Activated CD4-positive, alpha-beta memory T cell treated with anti-CD3 and anti-CD28 coated beads, Interleukin-2, amount 10 ng/mL, durations not matched to agents 7 days and 5 days (primary cell): ENCODE measurements at regions of chr19 and their contacts with region 1.

Region 1: DNA sequence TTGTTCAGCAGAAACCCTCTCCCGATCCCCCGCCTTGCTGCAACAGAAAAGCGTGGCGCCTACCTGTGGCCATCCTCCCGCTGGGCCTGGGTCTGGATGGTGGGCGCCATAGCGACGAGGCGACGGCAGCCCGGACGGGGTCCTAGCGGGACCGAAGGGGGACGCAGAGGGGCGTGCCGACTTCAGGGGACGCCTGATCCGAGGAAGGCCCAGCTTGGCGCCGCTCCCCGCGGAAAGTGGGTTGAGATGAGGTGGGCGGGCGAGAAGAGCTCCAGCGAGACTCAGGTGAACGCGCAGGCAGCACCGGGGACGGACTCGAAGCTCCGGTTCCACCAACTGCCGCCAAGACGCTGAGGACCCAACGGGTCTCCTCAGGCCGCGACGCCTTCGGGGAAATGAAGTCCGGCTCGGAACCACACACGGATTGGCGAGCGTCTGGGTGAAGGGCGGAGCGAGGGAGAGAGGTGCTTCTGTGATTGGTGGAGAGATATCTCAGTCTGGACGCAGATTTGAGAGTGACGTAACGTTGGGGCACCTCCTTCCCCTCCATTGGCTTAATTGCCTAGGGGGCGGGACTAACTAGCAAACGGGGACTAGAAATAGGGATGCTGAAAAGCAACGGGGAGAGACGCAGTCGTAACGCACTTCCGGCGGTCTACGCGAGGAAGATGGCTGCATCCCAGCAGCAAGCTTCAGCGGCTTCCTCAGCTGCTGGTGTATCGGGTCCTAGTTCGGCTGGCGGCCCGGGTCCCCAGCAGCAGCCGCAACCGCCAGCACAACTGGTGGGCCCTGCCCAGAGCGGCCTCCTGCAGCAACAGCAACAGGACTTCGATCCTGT is at the starts of genes MED29 and PAF1:
- DNase-seq: peak; percentile 97
- H3K4me3 Mint-ChIP-seq: peak within 1 kb of the TSS; percentile 90
- H3K27ac Mint-ChIP-seq: peak within 1 kb of the TSS; percentile 97
- H3K4me1 Mint-ChIP-seq: peaks cover 52% of the 10 kb centered on the region
- H3K27me3 Mint-ChIP-seq: no peaks in the 10 kb centered on the region
- total RNA-seq, gene MED29: 32.3 to 34.5 TPM
- total RNA-seq, gene PAF1: 44.0 to 47.2 TPM

Region 2: GRCh38 chr19:39270036-39270871 is 120.7 kb before region 1 on chr19:
- CTCF ChIA-PET with region 1: no interaction called
- POLR2A ChIA-PET with region 1: no interaction called
- DNase-seq: no peak
- H3K4me3 Mint-ChIP-seq: no peak overlapping the region
- H3K27ac Mint-ChIP-seq: no peak overlapping the region
- H3K4me1 Mint-ChIP-seq: no peaks in the 10 kb centered on the region
- H3K27me3 Mint-ChIP-seq: peaks cover 14% of the 10 kb centered on the region

Region 3: GRCh38 chr19:39335168-39335548 is 55.8 kb before region 1 on chr19:
- CTCF ChIA-PET with region 1: interaction called, 4 read pairs
- POLR2A ChIA-PET with region 1: interaction called, 27 read pairs
- DNase-seq: peak; percentile 44
- H3K4me3 Mint-ChIP-seq: peak overlapping the region; percentile 98
- H3K27ac Mint-ChIP-seq: peak overlapping the region; percentile 97
- H3K4me1 Mint-ChIP-seq: peaks cover 62% of the 10 kb centered on the region
- H3K27me3 Mint-ChIP-seq: no peaks in the 10 kb centered on the region

Region 4: DNA sequence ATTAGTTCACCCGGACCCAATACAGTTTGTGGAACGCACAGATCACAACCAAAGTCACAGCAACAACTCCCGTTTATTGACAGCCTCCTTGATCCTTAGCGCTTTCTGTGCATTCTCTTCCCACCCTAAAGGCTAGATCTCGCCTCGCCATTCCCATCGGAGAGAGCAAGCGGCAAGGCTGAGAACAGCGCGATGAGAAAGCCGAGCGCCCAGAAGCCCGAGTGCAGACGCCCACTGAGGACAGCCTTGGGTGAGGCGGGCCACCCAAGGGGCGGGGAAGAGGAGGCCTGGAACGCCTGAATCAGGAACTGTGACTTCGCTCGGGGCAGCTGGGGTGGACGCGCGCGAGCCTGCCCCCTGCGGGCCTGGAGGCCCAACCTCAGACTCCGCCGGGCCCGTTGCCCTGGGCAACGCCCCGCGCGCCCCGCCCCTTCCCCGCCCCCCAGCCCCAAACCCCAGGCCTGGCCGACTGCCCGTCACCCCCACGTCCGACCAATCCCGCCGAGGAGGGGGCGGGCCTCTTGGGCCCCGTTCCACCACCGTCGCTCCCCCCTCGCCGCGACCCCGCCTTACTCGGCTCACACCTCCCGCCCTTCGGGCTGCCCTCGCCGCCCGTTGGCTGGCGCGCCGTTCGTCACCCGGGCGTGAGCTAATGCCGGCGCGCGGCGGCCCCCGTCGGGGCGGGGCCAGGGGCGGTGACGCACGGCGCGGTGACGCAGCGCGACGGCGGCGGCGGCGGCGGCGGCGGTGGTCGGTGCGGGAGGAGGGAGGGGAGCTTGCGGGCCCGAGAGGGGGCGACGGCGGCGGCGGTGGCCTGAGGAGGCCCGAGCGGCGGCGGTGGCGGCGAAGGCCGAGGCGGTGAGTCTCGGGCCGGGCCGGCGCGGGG is 49.0 kb before region 1 on chr19 and contains the start of gene SAMD4B:
- CTCF ChIA-PET with region 1: interaction called, 9 read pairs
- POLR2A ChIA-PET with region 1: interaction called, 18 read pairs
- DNase-seq: peak; percentile 99
- H3K4me3 Mint-ChIP-seq: peak within 1 kb of the TSS; percentile 98
- H3K27ac Mint-ChIP-seq: peak within 1 kb of the TSS; percentile 95
- H3K4me1 Mint-ChIP-seq: peaks cover 71% of the 10 kb centered on the region
- H3K27me3 Mint-ChIP-seq: no peaks in the 10 kb centered on the region
- total RNA-seq, gene SAMD4B: 53.9 to 54.8 TPM

Region 5: DNA sequence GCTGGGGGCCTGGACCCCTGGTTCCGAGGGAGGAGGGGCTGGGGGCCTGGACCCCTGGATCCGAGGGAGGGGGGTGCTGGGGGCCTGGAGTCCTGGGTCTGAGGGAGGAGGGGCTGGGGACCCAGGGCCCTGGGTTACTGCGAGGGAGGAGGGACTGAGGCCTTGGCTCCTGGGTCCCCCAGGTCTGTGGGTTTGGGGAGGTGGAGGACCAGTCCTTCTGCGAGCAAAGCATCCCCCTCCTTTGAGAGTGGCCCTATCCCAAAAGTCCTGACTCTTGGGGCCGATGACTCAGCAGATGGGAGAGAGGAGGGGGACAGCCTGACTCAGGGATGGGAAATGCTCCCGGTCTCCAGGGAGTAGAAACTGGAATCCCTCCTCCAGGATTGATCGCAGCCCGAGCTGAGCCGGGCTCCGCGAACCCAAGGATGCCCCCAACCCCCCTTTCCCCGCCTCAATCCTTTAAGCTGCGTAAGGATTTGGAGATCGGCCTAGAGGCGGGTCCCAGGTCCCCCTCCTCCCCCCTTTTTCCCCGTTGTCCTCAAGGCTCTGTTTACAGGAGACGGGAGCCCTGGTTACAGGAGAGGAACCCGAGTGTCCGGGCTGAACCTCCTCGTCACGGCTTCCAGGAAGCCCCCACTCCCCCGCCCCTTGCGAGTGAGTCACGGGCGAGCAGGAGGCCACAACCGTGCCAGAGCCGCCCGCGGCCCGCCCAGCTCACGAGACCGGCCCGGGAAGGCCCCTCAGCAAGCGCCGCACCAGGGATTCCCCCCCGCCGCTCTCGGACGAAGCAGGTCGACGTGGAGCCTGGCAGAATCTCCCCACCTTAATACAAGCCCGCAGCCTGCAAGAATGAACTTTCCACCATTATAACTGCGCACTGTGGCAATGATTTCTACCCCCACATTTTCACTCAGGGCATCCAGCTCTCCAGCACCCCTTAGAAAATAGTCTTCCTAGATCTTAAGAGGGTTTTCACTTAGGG is 12.6 kb after region 1 on chr19:
- CTCF ChIA-PET with region 1: interaction called, 5 read pairs
- POLR2A ChIA-PET with region 1: interaction called, 195 read pairs
- DNase-seq: peak; percentile 95
- H3K4me3 Mint-ChIP-seq: peak overlapping the region; percentile 76
- H3K27ac Mint-ChIP-seq: peak overlapping the region; percentile 98
- H3K4me1 Mint-ChIP-seq: peaks cover 65% of the 10 kb centered on the region
- H3K27me3 Mint-ChIP-seq: no peaks in the 10 kb centered on the region